ENCODE measurements at regions of chr19 and their contacts with region 1.

Region 1: DNA sequence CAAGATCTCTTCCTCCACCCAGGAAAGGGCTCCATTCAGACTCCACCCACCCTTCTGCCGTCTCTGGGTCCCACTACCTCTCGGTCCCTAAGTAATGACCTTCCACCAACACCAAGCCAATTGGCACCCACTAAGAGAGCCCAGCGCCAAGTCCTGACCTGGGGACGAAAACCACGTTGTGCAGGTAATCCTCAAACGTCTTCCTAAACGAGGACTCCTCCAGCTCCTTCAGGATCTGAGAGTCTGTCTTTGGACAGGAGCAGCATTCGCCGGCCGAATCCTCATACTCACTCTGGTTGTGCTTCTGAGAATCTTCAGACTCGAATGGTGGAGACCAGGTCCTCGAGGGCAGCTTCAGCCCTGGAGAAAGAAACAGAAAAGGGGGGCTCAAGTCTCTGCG is 83.1 kb downstream of the ZNF557 start:
- DNase-seq: no peak
- ATAC-seq: no peak
- H3K4me3 ChIP-seq: no peak overlapping the region
- H3K27ac ChIP-seq: no peak overlapping the region
- H3K4me1 ChIP-seq: no peaks in the 10 kb centered on the region
- H3K27me3 ChIP-seq: no peaks in the 10 kb centered on the region
- CTCF ChIP-seq: no peak

Region 2: GRCh38 chr19:7137120-7137519 is 15.4 kb before region 1 on chr19:
- CTCF ChIA-PET with region 1: no interaction called
- POLR2A ChIA-PET with region 1: no interaction called
- intact Hi-C with region 1: loop called (anchors 2 kb)
- DNase-seq: no peak
- ATAC-seq: no peak
- H3K4me3 ChIP-seq: no peak overlapping the region
- H3K27ac ChIP-seq: no peak overlapping the region
- H3K4me1 ChIP-seq: peaks cover 41% of the 10 kb centered on the region
- H3K27me3 ChIP-seq: no peaks in the 10 kb centered on the region
- CTCF ChIP-seq: no peak

Region 3: DNA sequence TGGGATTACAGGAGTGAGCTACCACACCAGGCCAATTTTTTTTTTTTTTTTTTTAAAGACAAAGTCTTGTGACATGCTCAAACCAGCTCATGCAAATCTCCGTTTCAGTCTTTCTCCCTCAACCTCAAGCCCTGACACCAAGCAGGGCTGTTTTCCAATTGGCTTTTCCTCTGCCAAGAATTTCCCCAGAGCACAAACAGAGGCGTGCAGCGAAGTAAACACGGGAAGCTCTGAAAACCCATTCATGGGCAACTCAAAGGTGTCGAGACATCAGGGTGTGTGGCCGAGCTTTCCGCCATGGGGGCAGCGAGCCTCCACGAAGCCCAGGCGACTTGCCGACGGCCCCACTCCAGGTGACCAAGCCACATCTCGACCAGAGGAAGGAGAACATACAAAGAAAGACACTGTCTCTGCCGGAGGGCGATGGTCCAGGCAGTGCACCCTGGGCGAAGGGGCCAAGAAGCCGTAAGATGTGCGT is 71.7 kb after region 1 on chr19:
- CTCF ChIA-PET with region 1: no interaction called
- POLR2A ChIA-PET with region 1: no interaction called
- intact Hi-C with region 1: no loop called
- DNase-seq: peak; percentile 16
- ATAC-seq: peak; percentile 76
- H3K4me3 ChIP-seq: no peak overlapping the region
- H3K27ac ChIP-seq: no peak overlapping the region
- H3K4me1 ChIP-seq: no peaks in the 10 kb centered on the region
- H3K27me3 ChIP-seq: no peaks in the 10 kb centered on the region
- CTCF ChIP-seq: no peak

Region 4: GRCh38 chr19:7293795-7294570 is 141.4 kb after region 1 on chr19 and contains the start of gene INSR:
- CTCF ChIA-PET with region 1: interaction called, 12 read pairs
- POLR2A ChIA-PET with region 1: no interaction called
- intact Hi-C with region 1: no loop called
- DNase-seq: peak; percentile 94
- ATAC-seq: peak; percentile 91
- H3K4me3 ChIP-seq: peak within 1 kb of the TSS; percentile 70
- H3K27ac ChIP-seq: no peak within 1 kb of the TSS
- H3K4me1 ChIP-seq: peaks cover 16% of the 10 kb centered on the region
- H3K27me3 ChIP-seq: peaks cover 6% of the 10 kb centered on the region; the same call in 1 of the 2 replicates
- CTCF ChIP-seq: no peak
- total RNA-seq, gene INSR: 13.7 and 41.5 TPM in 2 replicates

Region 5: GRCh38 chr19:7340959-7341837 is 188.6 kb after region 1 on chr19:
- CTCF ChIA-PET with region 1: no interaction called
- POLR2A ChIA-PET with region 1: no interaction called
- intact Hi-C with region 1: loop called (anchors 1 kb)
- DNase-seq: peak; percentile 92
- ATAC-seq: peak; percentile 59
- H3K4me3 ChIP-seq: peak overlapping the region; percentile 6; the same call in 1 of the 2 replicates
- H3K27ac ChIP-seq: no peak overlapping the region
- H3K4me1 ChIP-seq: 0 out of 2 replicates have a peak, but pooled peaks cover 7% of the 10 kb centered on the region
- H3K27me3 ChIP-seq: no peaks in the 10 kb centered on the region; the same call in 1 of the 2 replicates
- CTCF ChIP-seq: peak; percentile 97

Measured in PC-3 (cell line).